ENCODE measurements at regions of chr3 and their contacts with region 1.

Region 1: GRCh38 chr3:141594357-141594756 is 107.5 kb downstream of the RASA2 start:
- DNase-seq: no peak
- ATAC-seq: no peak
- H3K4me3 Mint-ChIP-seq: no peak overlapping the region
- H3K27ac Mint-ChIP-seq: no peak overlapping the region
- H3K4me1 Mint-ChIP-seq: no peaks in the 10 kb centered on the region
- H3K27me3 Mint-ChIP-seq: no peaks in the 10 kb centered on the region
- CTCF ChIP-seq: no peak

Region 2: DNA sequence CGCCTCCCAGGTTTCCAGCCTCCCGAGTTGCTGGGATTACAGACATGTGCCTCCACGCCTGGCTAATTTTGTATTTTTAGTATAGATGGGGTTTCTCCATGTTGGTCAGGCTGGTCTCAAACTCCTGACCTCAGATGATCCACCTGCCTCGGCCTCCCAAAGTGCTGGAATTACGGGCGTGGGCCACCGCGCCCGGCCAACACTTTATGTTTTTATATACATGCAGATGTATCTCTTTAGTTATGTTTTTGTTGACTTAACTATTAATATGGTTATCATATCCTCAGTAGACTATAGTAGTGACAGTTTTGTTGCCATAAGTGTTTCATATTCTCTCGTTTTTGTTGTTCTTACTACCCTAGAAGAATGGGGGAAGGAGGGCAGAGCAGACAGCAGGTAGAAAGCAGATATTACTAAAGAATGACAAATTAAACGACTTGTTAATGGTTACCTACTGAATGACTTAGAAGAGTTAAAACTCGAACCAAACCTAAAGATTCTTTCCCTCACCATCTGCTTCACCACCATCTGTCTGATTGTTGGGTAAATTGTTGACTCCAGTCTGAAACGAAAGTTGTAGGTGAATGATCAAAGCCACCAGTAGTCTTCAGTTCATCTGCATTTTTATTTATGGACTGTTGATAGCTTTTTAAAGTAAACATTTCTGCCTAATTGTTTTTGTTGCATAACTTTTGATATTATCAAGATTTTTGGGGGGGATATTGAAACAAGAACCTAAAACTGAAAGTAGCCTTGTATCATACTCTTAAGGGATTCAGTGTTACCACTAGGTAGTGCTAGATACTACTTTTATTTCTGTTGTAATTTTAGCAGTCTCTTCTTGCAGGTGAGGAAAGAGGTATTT is 18.2 kb before region 1 on chr3:
- CTCF ChIA-PET with region 1: interaction called, 17 read pairs
- POLR2A ChIA-PET with region 1: interaction called, 3 read pairs
- intact Hi-C with region 1: no loop called
- DNase-seq: no peak
- ATAC-seq: peak; percentile 77
- H3K4me3 Mint-ChIP-seq: peak overlapping the region; percentile 21
- H3K27ac Mint-ChIP-seq: peak overlapping the region; percentile 89
- H3K4me1 Mint-ChIP-seq: peaks cover 20% of the 10 kb centered on the region
- H3K27me3 Mint-ChIP-seq: no peaks in the 10 kb centered on the region
- CTCF ChIP-seq: peak; percentile 59